ENCODE measurements at regions of chr15 and their contacts with region 1.

Region 1: DNA sequence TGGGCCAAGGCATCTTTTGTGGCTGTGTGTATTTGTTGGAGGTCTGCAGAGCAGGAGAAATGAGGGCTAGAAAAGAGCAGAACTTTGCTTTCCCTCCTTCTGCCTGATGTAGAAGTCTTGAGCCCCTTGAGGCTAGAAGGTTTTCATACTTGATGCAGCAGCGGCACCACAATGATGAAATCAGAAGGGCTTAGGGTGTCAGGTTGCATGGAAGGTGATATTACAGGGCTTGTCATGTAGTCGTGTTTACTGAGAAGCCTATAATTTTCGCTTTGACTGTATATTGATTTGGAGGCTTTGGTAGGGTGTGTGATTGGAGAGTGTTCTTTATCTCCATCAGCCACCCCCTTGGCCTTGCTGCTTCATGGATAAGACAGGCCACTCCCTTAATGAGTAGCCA is 339.8 kb downstream of the THSD4 start:
- DNase-seq: no peak
- ATAC-seq: no peak
- H3K4me3 ChIP-seq: no peak overlapping the region
- H3K27ac ChIP-seq: no peak overlapping the region
- H3K4me1 ChIP-seq: peaks cover 5% of the 10 kb centered on the region
- H3K27me3 ChIP-seq: no peaks in the 10 kb centered on the region

Region 2: DNA sequence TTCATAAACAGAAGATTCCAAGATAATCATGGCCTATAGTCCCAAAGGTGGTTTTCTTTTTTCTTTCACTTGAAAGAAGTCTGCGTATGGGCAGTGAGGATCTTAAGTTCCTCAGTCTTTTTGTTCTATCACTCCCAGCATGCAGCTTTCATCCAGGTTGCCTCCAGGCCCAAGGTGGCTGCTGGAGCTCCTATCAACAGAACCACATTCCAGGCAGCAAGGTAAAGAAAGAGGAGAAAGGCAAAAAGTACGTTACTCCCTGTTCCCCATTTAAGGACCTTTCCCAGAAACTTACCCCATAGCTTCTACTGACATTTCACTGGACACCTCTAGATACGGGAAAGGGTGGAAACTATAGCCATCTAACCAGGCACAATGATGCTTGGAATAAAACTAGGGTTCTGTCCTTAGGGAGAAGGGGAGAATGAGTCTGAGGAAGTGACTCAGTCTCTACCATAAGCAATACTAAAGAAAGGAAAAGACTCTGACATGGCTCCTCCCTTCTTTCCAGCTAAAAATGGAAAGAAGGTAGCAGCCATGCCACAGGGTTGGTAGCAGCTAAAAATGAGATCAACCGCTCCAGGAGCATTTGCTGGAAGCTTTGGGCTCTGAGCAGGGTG is 41.3 kb after region 1 on chr15:
- intact Hi-C with region 1: no loop called
- DNase-seq: no peak
- ATAC-seq: peak in 1 of 2 donors; percentile 58
- H3K4me3 ChIP-seq: no peak overlapping the region
- H3K27ac ChIP-seq: peak overlapping the region; percentile 30
- H3K4me1 ChIP-seq: peaks cover 5% of the 10 kb centered on the region
- H3K27me3 ChIP-seq: no peaks in the 10 kb centered on the region

Region 3: DNA sequence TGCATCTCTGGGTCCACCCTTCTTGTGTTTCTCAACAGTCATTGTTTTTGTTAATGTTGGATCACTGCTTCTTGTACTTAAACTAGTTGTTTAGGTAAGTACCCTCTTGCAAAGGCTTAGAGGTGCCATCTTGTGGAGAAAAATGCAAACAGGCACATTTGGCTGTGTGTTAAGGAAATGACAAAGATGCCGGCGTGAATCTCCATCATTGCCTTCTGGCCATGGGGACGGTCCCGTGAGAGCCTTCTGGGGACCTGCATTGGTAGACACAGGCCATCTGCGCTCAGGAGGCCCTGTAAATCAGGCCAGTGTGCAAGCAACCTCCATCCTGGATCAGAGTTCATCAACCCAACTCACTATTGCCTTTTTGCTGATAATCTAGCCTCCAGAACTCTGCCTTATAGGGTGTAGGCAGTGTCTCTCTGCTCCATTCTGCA is 196.7 kb after region 1 on chr15:
- intact Hi-C with region 1: loop called in 1 of 4 experiments (anchors 10 kb)
- DNase-seq: peak in 1 of 3 donors; percentile 50
- ATAC-seq: peak; percentile 29 to 44
- H3K4me3 ChIP-seq: no peak overlapping the region
- H3K27ac ChIP-seq: no peak overlapping the region
- H3K4me1 ChIP-seq: peaks cover 2% of the 10 kb centered on the region
- H3K27me3 ChIP-seq: no peaks in the 10 kb centered on the region

Region 4: GRCh38 chr15:71800835-71801745 is 346.0 kb after region 1 on chr15:
- intact Hi-C with region 1: loop called in 1 of 4 experiments (anchors 10 kb)
- DNase-seq: no peak
- ATAC-seq: peak; percentile 85
- H3K4me3 ChIP-seq: no peak overlapping the region
- H3K27ac ChIP-seq: no peak overlapping the region
- H3K4me1 ChIP-seq: no peaks in the 10 kb centered on the region
- H3K27me3 ChIP-seq: no peaks in the 10 kb centered on the region

Measured in right cardiac atrium (tissue), 5 donors.